ENCODE measurements at regions of chr7 and their contacts with region 1.

Region 1: DNA sequence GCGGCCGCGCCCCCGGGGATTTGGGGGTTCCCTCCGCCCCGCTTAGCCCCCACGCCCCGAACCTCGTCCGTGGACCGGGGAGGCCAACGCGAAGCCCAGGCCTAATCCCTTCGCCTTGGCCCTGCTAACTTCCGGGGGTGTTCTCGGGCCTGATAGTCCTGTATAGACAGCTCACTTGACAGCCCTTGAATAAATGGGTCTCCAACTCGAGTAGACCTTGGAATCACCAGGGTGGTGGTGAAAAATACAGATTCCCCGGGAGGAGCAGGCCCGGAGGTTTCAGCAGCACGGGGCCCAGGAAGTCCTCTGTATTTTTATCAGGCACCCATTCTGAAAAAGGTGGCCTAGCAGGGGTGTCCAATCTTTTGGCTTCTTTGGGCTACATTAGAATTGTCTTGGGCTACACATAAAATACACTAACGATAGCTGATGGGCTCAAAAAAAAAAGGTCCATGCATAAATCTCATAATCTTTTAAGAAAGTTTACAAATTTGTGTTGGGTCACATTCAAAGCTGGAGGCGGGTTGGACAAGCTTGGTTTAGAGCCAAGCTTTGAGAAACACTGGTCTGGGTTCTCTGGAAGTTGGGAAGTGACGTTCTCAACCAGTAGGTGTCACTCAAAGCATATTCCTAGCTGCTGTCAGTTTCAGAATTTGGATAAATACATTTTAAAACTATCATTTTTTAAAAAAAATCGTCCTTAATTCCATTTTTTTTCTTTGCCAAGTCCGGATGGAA is 221.7 kb downstream of the PHTF2 start:
- DNase-seq: peak in 1 of 2 experiments; percentile 54
- H3K4me3 ChIP-seq: peak overlapping the region in 2 of 4 experiments; percentile 51 to 74; a peak in 4 of 8 replicates
- H3K27ac ChIP-seq: no peak overlapping the region
- H3K4me1 ChIP-seq: peaks cover 0 to 11% (median 3%) of the 10 kb centered on the region in 4 experiments; a peak in 4 of 7 replicates
- H3K27me3 ChIP-seq: peaks cover 2 to 10% (median 4%) of the 10 kb centered on the region in 4 experiments; a peak in 5 of 7 replicates
- CTCF ChIP-seq: peak in 2 of 3 experiments; percentile 62 to 67; a peak in 3 of 4 replicates
- EP300 ChIP-seq: no peak
- POLR2A ChIP-seq: no peak
- RAD21 ChIP-seq: peak; percentile 80 to 82

Region 2: DNA sequence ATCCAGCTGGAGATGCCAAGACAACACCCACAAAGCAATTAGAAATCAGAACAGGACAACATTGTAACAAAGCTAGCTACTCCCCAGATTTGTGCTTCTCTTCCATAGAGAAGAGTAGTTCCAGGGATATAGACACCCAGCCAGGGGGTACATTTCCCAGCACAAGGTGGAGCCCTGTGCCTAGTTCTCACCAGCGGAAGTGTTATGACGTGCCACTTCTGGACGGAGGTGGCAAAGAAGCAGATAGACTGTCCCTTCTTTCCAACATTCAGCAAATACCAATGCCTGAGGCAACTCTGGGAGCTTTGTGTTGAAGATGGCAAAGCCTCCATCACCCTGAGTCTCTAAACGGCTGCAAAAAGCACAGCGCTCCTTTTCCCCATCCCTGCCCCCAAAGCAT is 580.7 kb before region 1 on chr7:
- CTCF ChIA-PET with region 1: no interaction called
- POLR2A ChIA-PET with region 1: no interaction called
- DNase-seq: no peak
- H3K4me3 ChIP-seq: no peak overlapping the region
- H3K27ac ChIP-seq: no peak overlapping the region
- H3K4me1 ChIP-seq: peaks cover 0 to 3% (median 0%) of the 10 kb centered on the region in 4 experiments; a peak in 2 of 7 replicates
- H3K27me3 ChIP-seq: no peaks in the 10 kb centered on the region; a peak in 1 of 7 replicates
- CTCF ChIP-seq: peak in 1 of 3 experiments; percentile 27; a peak in 1 of 4 replicates
- EP300 ChIP-seq: no peak
- POLR2A ChIP-seq: no peak
- RAD21 ChIP-seq: peak; percentile 52 to 54

Region 3: DNA sequence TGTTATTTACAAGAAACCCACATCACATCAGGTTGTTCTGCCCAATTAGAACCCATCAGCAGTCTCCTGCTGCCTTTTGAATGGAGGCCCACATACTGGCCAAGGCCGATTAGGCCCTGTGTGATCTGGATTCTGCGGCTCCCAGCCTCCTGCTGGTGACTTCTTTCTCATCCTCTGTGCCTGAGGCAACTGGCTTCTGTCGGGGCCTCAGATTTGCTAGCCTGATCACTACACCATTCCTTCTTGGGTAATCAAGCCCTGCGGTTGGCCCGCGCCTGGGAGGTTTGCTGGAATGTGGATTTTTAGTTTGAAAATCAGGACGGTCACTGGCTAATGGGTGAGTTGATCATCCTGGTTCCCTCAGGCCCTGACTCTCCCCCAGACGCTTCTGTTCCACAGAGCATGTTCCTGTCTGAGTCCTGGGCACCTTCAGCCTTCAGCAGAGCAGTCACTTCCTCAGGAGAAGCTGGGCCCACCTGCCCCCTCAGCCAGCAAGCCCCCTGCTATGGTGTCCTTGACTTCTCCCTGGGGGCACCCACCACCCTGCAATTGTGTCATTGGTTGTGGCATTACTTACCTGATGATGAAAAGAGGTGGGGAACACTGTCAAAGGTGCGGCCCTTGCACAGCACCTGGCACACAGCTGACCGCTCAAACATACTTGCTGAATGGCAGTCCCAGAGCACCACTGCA is 14.1 kb before region 1 on chr7:
- CTCF ChIA-PET with region 1: interaction called, 12 read pairs
- POLR2A ChIA-PET with region 1: no interaction called
- DNase-seq: no peak
- H3K4me3 ChIP-seq: no peak overlapping the region
- H3K27ac ChIP-seq: no peak overlapping the region
- H3K4me1 ChIP-seq: no peaks in the 10 kb centered on the region
- H3K27me3 ChIP-seq: no peaks in the 10 kb centered on the region
- CTCF ChIP-seq: no peak
- EP300 ChIP-seq: no peak
- POLR2A ChIP-seq: no peak
- RAD21 ChIP-seq: peak in 1 of 2 experiments; percentile 26; a peak in 2 of 4 replicates

Region 4: GRCh38 chr7:78033410-78033809 is 13.1 kb after region 1 on chr7:
- CTCF ChIA-PET with region 1: interaction called, 73 read pairs
- POLR2A ChIA-PET with region 1: interaction called, 8 read pairs
- DNase-seq: no peak
- H3K4me3 ChIP-seq: no peak overlapping the region
- H3K27ac ChIP-seq: no peak overlapping the region
- H3K4me1 ChIP-seq: peaks cover 3 to 18% (median 10%) of the 10 kb centered on the region in 4 experiments; a peak in 6 of 7 replicates
- H3K27me3 ChIP-seq: no peaks in the 10 kb centered on the region
- CTCF ChIP-seq: no peak
- EP300 ChIP-seq: no peak
- POLR2A ChIP-seq: no peak
- RAD21 ChIP-seq: no peak

Region 5: GRCh38 chr7:78057571-78057970 is 37.3 kb after region 1 on chr7:
- CTCF ChIA-PET with region 1: interaction called, 13 read pairs
- POLR2A ChIA-PET with region 1: no interaction called
- DNase-seq: no peak
- H3K4me3 ChIP-seq: no peak overlapping the region
- H3K27ac ChIP-seq: no peak overlapping the region
- H3K4me1 ChIP-seq: peaks cover 0 to 4% (median 1%) of the 10 kb centered on the region in 4 experiments; a peak in 3 of 7 replicates
- H3K27me3 ChIP-seq: no peaks in the 10 kb centered on the region
- CTCF ChIP-seq: no peak
- EP300 ChIP-seq: no peak
- POLR2A ChIP-seq: no peak
- RAD21 ChIP-seq: no peak

Region 6: GRCh38 chr7:78080811-78081210 is 60.5 kb after region 1 on chr7:
- CTCF ChIA-PET with region 1: interaction called, 35 read pairs
- POLR2A ChIA-PET with region 1: interaction called, 3 read pairs
- DNase-seq: no peak
- H3K4me3 ChIP-seq: no peak overlapping the region
- H3K27ac ChIP-seq: no peak overlapping the region
- H3K4me1 ChIP-seq: peaks cover 0 to 7% (median 2%) of the 10 kb centered on the region in 4 experiments; a peak in 2 of 7 replicates
- H3K27me3 ChIP-seq: peaks cover 0 to 8% (median 3%) of the 10 kb centered on the region in 4 experiments; a peak in 4 of 7 replicates
- CTCF ChIP-seq: no peak
- EP300 ChIP-seq: no peak
- POLR2A ChIP-seq: no peak
- RAD21 ChIP-seq: no peak

Region 7: DNA sequence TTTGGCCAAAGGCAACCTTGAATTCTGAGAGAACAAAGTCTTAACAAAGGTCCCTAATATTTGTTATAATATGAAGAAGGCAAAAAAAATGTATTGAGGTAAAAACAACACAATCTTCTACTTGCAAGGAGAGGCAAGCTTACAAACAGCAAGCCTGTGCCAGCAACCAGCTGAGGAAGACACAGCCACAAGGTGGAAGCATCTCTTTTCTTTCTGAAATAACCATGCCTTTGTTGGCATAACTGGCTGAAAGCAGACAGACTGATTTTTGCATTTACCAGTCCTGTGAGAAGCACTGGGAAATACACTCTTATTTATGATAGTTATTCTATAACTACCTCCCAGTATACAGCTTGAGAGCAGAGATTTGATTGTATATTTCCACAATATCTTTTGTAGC is 70.3 kb after region 1 on chr7:
- CTCF ChIA-PET with region 1: interaction called, 23 read pairs
- POLR2A ChIA-PET with region 1: no interaction called
- DNase-seq: no peak
- H3K4me3 ChIP-seq: no peak overlapping the region
- H3K27ac ChIP-seq: no peak overlapping the region
- H3K4me1 ChIP-seq: no peaks in the 10 kb centered on the region
- H3K27me3 ChIP-seq: no peaks in the 10 kb centered on the region
- CTCF ChIP-seq: peak in 1 of 3 experiments; percentile 39; a peak in 2 of 4 replicates
- EP300 ChIP-seq: no peak
- POLR2A ChIP-seq: no peak
- RAD21 ChIP-seq: peak; percentile 47 to 58

Region 8: DNA sequence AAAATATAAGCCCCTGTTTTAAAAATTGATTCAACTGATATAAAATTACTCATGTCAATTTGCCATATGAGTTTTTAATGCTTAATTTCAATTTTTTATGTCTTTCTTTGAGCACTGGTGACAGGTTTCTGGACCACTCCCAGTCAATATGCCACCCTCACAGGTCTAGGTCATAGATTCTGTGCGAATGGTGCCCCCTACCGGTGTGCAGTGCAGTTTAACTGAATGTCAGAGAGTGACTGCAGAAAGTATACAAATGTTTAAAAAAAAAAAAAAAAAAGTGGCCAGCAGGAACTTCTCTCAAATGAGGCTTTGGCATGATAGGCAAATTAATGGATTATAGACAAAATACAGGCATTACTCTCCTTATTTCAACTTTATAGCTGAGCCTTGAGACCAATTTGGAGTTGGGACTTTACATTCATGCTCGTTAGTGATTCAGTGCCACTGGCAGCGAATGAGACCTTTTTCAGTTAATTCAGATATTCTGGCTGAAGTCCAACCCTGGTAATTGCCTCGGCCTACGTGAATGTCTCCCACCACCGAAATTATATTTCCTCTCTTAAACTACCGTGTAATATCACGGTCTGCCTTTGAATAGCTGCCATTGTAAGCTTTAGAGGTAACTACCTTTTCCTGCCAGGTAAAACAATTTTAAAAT is 205.9 kb after region 1 on chr7:
- CTCF ChIA-PET with region 1: interaction called, 10 read pairs
- POLR2A ChIA-PET with region 1: no interaction called
- DNase-seq: peak; percentile 19 to 85
- H3K4me3 ChIP-seq: no peak overlapping the region
- H3K27ac ChIP-seq: no peak overlapping the region
- H3K4me1 ChIP-seq: no peaks in the 10 kb centered on the region
- H3K27me3 ChIP-seq: no peaks in the 10 kb centered on the region
- CTCF ChIP-seq: peak; percentile 58 to 72 (median 64)
- EP300 ChIP-seq: no peak
- POLR2A ChIP-seq: no peak
- RAD21 ChIP-seq: peak; percentile 82 to 84

Measured in H1 (cell line).